ENCODE measurements at regions of chr6 and their contacts with region 1.

Region 1: DNA sequence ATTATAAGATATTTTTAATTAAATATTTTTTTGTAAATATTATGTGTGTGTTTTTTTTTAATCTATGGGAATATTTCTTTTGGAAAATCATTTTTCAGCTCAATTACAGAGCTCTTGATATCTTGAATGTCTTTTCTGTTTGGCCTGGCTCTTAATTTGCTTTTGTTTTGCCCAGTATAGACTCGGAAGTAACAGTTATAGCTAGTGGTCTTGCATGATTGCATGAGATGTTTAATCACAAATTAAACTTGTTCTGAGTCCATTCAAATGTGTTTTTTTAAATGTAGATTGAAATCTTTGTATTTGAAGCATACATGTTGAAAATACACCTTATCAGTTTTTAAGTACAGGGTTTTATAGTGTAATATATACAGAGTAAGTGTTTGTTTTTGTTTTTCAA is 2.6 kb downstream of the ID4 start:
- DNase-seq: no peak
- ATAC-seq: no peak
- H3K4me3 ChIP-seq: no peak overlapping the region; a peak in 1 of 4 replicates
- H3K27ac ChIP-seq: peak overlapping the region; percentile 79; the same call in 1 of the 2 replicates
- H3K4me1 ChIP-seq: peaks cover 20% of the 10 kb centered on the region
- H3K27me3 ChIP-seq: no peaks in the 10 kb centered on the region
- CTCF ChIP-seq: no peak

Region 2: GRCh38 chr6:19697744-19698290 is 142.0 kb before region 1 on chr6:
- CTCF ChIA-PET with region 1: no interaction called
- POLR2A ChIA-PET with region 1: interaction called, 23 read pairs
- in situ Hi-C with region 1: no loop called
- intact Hi-C with region 1: no loop called
- DNase-seq: no peak
- ATAC-seq: no peak
- H3K4me3 ChIP-seq: no peak overlapping the region
- H3K27ac ChIP-seq: no peak overlapping the region
- H3K4me1 ChIP-seq: no peaks in the 10 kb centered on the region
- H3K27me3 ChIP-seq: no peaks in the 10 kb centered on the region
- CTCF ChIP-seq: no peak

Measured in Panc1 (cell line).